Endothelial cell of umbilical vein (primary cell): ENCODE measurements at regions of chr7 and their contacts with region 1.

Region 1: GRCh38 chr7:41705109-41705901 is 2.4 kb upstream of the INHBA start:
- DNase-seq: peak; percentile 94
- H3K4me3 ChIP-seq: peak overlapping the region; percentile 6 to 58 (median 36)
- H3K27ac ChIP-seq: peak overlapping the region; percentile 56
- H3K4me1 ChIP-seq: peaks cover 18% of the 10 kb centered on the region
- H3K27me3 ChIP-seq: no peaks in the 10 kb centered on the region
- CTCF ChIP-seq: peak; percentile 85 to 93
- POLR2A ChIP-seq: no peak

Region 2: GRCh38 chr7:40134428-40135316 is 1570.6 kb before region 1 on chr7 and contains the starts of genes MPLKIP and SUGCT:
- CTCF ChIA-PET with region 1: no interaction called
- POLR2A ChIA-PET with region 1: no interaction called
- dilution Hi-C with region 1: no loop called
- intact Hi-C with region 1: loop called (anchors 10 kb)
- DNase-seq: peak; percentile 89
- H3K4me3 ChIP-seq: peak within 1 kb of the TSS; percentile 63 to 99 (median 99)
- H3K27ac ChIP-seq: peak within 1 kb of the TSS; percentile 67
- H3K4me1 ChIP-seq: peaks cover 14% of the 10 kb centered on the region
- H3K27me3 ChIP-seq: no peaks in the 10 kb centered on the region
- CTCF ChIP-seq: peak; percentile 96 to 99
- POLR2A ChIP-seq: peak; percentile 35
- total RNA-seq, gene MPLKIP: 40.5 and 40.9 TPM in 2 replicates
- total RNA-seq, gene SUGCT: 1.4 and 2.2 TPM in 2 replicates

Region 3: DNA sequence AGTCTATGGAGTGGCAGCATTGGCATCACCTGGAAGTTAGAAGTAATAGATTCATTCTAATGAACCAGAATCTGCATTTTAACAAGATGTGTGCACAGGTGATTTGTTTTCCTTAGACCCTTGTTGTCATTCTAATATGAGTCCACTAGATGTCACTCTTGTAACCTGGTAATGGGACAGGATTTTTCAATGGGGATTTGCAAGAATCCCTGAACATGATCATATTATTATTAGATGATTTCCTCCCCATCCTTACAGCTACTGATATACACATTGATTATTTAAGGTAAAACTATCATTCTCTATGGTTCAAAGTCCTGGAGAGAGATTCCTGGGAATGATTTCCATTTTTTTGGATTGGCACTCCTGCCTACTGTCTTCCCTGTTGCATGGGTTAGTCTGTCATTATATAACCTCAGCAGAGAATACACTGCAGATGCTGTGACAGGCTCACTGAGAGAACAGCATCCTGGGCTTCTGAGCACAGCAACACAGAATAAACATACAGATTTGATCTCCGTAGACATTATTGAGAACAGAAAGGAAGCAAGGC is 1375.6 kb before region 1 on chr7:
- CTCF ChIA-PET with region 1: interaction called, 20 read pairs
- POLR2A ChIA-PET with region 1: no interaction called
- dilution Hi-C with region 1: no loop called
- intact Hi-C with region 1: loop called (anchors 1 kb)
- DNase-seq: peak; percentile 72
- H3K4me3 ChIP-seq: no peak overlapping the region
- H3K27ac ChIP-seq: no peak overlapping the region
- H3K4me1 ChIP-seq: peaks cover 2% of the 10 kb centered on the region
- H3K27me3 ChIP-seq: no peaks in the 10 kb centered on the region
- CTCF ChIP-seq: peak; percentile 42 to 47
- POLR2A ChIP-seq: no peak

Region 4: GRCh38 chr7:40604601-40605438 is 1100.5 kb before region 1 on chr7:
- CTCF ChIA-PET with region 1: interaction called, 28 read pairs
- POLR2A ChIA-PET with region 1: no interaction called
- dilution Hi-C with region 1: no loop called
- intact Hi-C with region 1: loop called (anchors 1 kb)
- DNase-seq: peak; percentile 65
- H3K4me3 ChIP-seq: no peak overlapping the region
- H3K27ac ChIP-seq: no peak overlapping the region
- H3K4me1 ChIP-seq: no peaks in the 10 kb centered on the region
- H3K27me3 ChIP-seq: no peaks in the 10 kb centered on the region
- CTCF ChIP-seq: peak; percentile 92 to 96
- POLR2A ChIP-seq: no peak

Region 5: GRCh38 chr7:40839881-40840280 is 865.4 kb before region 1 on chr7:
- CTCF ChIA-PET with region 1: interaction called, 5 read pairs
- POLR2A ChIA-PET with region 1: no interaction called
- dilution Hi-C with region 1: no loop called
- intact Hi-C with region 1: loop called (anchors 2 kb)
- DNase-seq: peak; percentile 48
- H3K4me3 ChIP-seq: no peak overlapping the region
- H3K27ac ChIP-seq: no peak overlapping the region
- H3K4me1 ChIP-seq: peaks cover 6% of the 10 kb centered on the region
- H3K27me3 ChIP-seq: no peaks in the 10 kb centered on the region
- CTCF ChIP-seq: no peak
- POLR2A ChIP-seq: no peak

Region 6: GRCh38 chr7:41010418-41010817 is 694.9 kb before region 1 on chr7:
- CTCF ChIA-PET with region 1: interaction called, 87 read pairs
- POLR2A ChIA-PET with region 1: no interaction called
- dilution Hi-C with region 1: no loop called
- intact Hi-C with region 1: no loop called
- DNase-seq: peak; percentile 12
- H3K4me3 ChIP-seq: no peak overlapping the region
- H3K27ac ChIP-seq: peak overlapping the region; percentile 14
- H3K4me1 ChIP-seq: peaks cover 8% of the 10 kb centered on the region
- H3K27me3 ChIP-seq: no peaks in the 10 kb centered on the region
- CTCF ChIP-seq: no peak
- POLR2A ChIP-seq: no peak

Region 7: DNA sequence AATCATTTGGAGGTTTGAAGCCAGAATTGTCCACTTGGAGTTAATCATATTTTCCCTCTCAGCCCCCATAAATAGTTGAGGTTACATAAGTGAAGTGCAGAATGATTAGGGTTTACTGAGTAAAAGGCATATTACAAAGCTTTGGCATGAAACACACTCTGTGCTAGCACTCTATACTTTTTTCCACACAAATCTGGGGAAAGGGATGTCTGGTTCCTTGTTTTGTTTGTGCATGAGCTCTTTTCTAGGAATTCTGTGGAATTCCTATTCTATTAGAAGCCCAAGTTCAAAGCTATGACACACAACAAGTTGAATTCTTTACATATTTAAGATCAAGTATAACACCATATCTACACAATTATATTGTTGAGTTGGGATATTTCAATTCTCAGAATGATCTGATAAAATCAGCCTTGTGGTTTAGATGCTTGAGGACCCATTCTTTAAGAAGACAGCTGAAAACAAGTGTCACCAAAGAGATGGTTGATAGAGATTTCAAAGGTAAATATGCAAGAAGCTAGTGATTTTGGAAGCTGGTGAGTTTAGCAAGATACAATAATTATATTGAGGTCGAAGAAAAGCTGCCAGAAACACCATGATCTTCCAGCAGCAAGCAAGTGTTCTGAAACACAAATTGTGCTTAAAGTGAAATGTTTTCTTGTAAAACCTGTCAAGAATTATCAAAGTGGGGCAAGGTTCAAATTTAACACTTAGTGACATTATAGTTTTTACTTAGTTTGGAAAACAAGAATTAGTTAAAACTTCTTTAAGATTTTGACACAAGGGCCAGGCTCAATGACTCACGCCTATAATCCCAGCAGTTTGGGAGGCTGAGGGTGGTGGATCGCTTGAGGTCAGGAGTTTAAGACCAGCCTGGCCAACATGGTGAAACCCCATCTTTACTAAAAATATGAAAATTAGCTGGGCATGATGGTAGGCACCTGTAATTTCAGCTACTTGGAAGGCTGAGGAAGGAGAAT is 125.1 kb before region 1 on chr7:
- CTCF ChIA-PET with region 1: interaction called, 15 read pairs
- POLR2A ChIA-PET with region 1: interaction called, 3 read pairs
- dilution Hi-C with region 1: no loop called
- intact Hi-C with region 1: no loop called
- DNase-seq: peak; percentile 95
- H3K4me3 ChIP-seq: no peak overlapping the region
- H3K27ac ChIP-seq: peak overlapping the region; percentile 93
- H3K4me1 ChIP-seq: peaks cover 43% of the 10 kb centered on the region
- H3K27me3 ChIP-seq: no peaks in the 10 kb centered on the region
- CTCF ChIP-seq: no peak
- POLR2A ChIP-seq: no peak